ENCODE measurements at regions of chr5 and their contacts with region 1.

Region 1: GRCh38 chr5:126676195-126676624 is 75.5 kb downstream of the PHAX start:
- DNase-seq: peak; percentile 60
- ATAC-seq: peak; percentile 86
- H3K4me3 ChIP-seq: no peak overlapping the region
- H3K27ac ChIP-seq: no peak overlapping the region
- H3K4me1 ChIP-seq: no peaks in the 10 kb centered on the region
- H3K27me3 ChIP-seq: no peaks in the 10 kb centered on the region
- CTCF ChIP-seq: peak; percentile 74 to 83 (median 79); a peak in 5 of 6 replicates
- POLR2A ChIP-seq: no peak
- RAD21 ChIP-seq: peak; percentile 93

Region 2: DNA sequence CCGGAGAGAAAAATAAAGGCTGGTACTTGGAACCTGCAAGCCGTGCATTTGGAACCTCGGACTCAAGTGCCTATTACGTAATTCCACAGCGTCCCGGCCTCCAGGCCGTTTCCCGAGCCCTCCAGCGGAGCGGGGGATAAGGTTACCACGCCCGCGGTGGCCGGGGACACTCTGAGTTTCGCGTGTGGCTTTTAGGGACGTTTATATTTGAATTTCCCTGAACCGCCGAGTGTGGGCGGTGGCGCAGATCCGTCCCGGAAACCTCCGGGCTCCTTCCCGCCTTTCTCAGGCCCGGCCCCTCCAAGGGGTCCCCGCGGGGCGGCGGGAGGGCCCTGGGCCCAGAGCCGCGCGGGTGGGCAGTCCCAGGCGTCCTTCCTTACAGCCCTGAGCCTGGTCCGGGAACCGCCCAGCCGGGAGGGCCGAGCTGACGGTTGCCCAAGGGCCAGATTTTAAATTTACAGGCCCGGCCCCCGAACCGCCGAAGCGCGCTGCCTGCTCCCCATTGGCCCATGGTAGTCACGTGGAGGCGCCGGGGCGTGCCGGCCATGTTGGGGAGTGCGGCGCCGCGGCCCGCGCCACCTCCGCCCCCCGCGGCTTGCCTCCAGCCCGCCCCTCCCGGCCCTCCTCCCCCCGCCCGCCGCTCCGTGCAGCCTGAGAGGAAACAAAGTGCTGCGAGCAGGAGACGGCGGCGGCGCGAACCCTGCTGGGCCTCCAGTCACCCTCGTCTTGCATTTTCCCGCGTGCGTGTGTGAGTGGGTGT is 100.5 kb after region 1 on chr5 and contains the start of gene LMNB1:
- CTCF ChIA-PET with region 1: interaction called, 71 read pairs
- POLR2A ChIA-PET with region 1: interaction called, 5 read pairs
- RAD21 ChIA-PET with region 1: interaction called, 3 to 4 read pairs
- intact Hi-C with region 1: loop called (anchors 1 kb)
- DNase-seq: peak; percentile 93
- ATAC-seq: peak; percentile 84
- H3K4me3 ChIP-seq: peak within 1 kb of the TSS; percentile 74 to 98
- H3K27ac ChIP-seq: peak within 1 kb of the TSS; percentile 100
- H3K4me1 ChIP-seq: peaks cover 13 to 32% of the 10 kb centered on the region in 2 experiments
- H3K27me3 ChIP-seq: no peaks in the 10 kb centered on the region
- CTCF ChIP-seq: no peak
- POLR2A ChIP-seq: no peak
- RAD21 ChIP-seq: peak; percentile 4; the same call in 1 of the 2 replicates
- total RNA-seq, gene LMNB1: 150 TPM

Region 3: DNA sequence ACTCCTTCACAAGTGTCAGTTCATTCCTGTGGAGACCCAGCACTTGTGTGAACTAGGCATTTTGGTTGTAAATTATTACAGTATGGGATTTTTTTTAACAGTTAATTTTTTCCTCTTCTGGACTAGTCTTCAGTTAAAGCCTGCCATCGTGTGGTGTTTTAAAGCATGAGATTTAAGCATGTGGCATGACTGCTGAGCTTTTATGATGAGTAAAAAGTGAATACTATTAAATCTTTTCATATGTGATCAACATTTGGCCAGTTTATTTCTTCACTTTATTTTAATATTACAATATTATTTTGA is 125.7 kb after region 1 on chr5:
- CTCF ChIA-PET with region 1: interaction called, 14 read pairs
- POLR2A ChIA-PET with region 1: no interaction called
- RAD21 ChIA-PET with region 1: interaction called in 1 of 2 experiments, 4 read pairs
- intact Hi-C with region 1: no loop called
- DNase-seq: no peak
- ATAC-seq: no peak
- H3K4me3 ChIP-seq: no peak overlapping the region
- H3K27ac ChIP-seq: no peak overlapping the region
- H3K4me1 ChIP-seq: peaks cover 4 to 6% of the 10 kb centered on the region in 2 experiments; a peak in 2 of 4 replicates
- H3K27me3 ChIP-seq: no peaks in the 10 kb centered on the region
- CTCF ChIP-seq: peak in 2 of 3 experiments; percentile 25 to 37; a peak in 1 of 6 replicates
- POLR2A ChIP-seq: no peak
- RAD21 ChIP-seq: peak; percentile 55

Region 4: GRCh38 chr5:126808521-126808988 is 132.3 kb after region 1 on chr5:
- CTCF ChIA-PET with region 1: interaction called, 5 read pairs
- POLR2A ChIA-PET with region 1: no interaction called
- RAD21 ChIA-PET with region 1: no interaction called
- intact Hi-C with region 1: loop called (anchors 1 kb)
- DNase-seq: no peak
- ATAC-seq: peak; percentile 79
- H3K4me3 ChIP-seq: no peak overlapping the region
- H3K27ac ChIP-seq: no peak overlapping the region
- H3K4me1 ChIP-seq: no peaks in the 10 kb centered on the region
- H3K27me3 ChIP-seq: no peaks in the 10 kb centered on the region
- CTCF ChIP-seq: peak; percentile 35 to 49 (median 44); a peak in 3 of 6 replicates
- POLR2A ChIP-seq: no peak
- RAD21 ChIP-seq: peak; percentile 54

Measured in HCT116 (cell line).